Activated naive CD4-positive, alpha-beta T cell treated with anti-CD3 and anti-CD28 coated beads for 36 hours (primary cell): ENCODE measurements at regions of chr5 and their contacts with region 1.

Region 1: DNA sequence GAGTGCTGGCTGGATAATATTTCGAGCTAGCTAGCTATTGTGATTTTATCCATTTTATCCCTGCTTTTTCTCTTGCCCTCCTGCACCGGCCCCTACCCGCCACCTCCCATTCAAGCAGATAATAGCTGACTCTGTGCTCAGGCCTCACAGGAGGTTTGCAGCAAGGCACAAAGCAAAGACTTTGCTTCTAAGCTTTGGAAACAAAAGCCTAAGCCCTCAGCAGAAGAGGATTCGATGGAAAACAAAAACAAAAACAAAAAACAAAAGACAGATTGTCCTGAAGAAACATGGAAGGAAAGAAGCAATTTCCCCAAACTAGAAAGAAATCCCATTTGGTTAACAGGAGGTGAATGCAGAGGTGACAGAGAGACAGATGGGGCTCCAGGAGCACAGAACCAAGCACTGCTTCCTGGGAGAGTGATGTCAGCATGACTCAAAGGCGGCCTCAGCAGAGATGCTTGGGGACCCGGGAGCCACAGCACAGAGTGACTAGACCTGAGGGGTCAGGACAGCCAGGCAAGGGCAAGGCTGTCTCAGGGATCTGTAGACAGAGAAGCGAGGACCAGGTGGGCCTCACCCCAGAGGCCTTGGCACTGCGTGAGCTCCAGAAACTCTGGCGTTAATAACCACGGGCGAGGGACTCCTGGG is 28.4 kb downstream of the MTX3 start:
- DNase-seq: peak; percentile 61
- H3K4me3 Mint-ChIP-seq: no peak overlapping the region
- H3K27ac Mint-ChIP-seq: peak overlapping the region; percentile 33
- H3K4me1 Mint-ChIP-seq: peaks cover 16% of the 10 kb centered on the region
- H3K27me3 Mint-ChIP-seq: peaks cover 17% of the 10 kb centered on the region

Region 2: DNA sequence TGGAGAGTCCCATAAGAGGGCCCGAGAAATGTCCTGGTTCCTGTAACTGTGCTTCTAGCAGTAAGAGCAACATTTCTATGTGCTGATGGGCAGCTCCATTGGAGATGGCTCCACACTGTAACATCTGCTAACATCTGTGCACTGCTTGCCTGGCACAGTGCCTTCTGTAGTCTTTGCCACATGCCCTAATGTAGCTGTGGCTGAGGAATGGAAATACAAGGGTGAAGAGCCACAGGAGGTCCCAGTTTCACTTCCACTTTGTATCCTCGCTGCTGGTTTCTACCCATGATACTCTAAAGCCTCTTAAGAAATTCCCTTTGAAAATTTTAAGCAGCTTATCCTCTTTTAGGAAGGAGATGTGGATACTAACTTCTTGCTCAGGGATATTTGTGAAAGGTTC is 546.2 kb before region 1 on chr5:
- CTCF ChIA-PET with region 1: no interaction called
- intact Hi-C with region 1: no loop called
- DNase-seq: no peak
- H3K4me3 Mint-ChIP-seq: no peak overlapping the region
- H3K27ac Mint-ChIP-seq: no peak overlapping the region
- H3K4me1 Mint-ChIP-seq: no peaks in the 10 kb centered on the region
- H3K27me3 Mint-ChIP-seq: no peaks in the 10 kb centered on the region

Region 3: DNA sequence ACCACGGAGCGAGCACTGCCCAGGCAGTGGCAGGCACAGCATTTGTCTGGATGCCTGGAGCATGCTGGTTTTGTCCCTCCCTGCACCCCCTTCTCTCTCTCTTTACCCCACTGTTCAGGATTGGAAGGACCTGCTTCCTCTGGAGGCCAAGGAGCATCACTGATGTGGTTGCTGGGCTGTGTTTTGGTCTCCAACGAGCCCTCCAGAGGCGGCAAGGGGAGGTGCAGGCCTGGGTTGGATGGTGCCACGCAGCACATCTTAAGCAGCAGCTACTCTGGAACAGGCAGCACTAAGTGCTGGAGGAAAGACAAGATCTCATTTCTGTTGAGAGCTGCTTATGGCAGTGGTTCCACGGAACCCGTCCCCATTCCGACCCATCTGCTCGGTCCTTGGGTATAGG is 133.4 kb before region 1 on chr5:
- CTCF ChIA-PET with region 1: no interaction called
- intact Hi-C with region 1: no loop called
- DNase-seq: peak; percentile 12
- H3K4me3 Mint-ChIP-seq: no peak overlapping the region
- H3K27ac Mint-ChIP-seq: no peak overlapping the region
- H3K4me1 Mint-ChIP-seq: no peaks in the 10 kb centered on the region
- H3K27me3 Mint-ChIP-seq: peaks cover 6% of the 10 kb centered on the region

Region 4: DNA sequence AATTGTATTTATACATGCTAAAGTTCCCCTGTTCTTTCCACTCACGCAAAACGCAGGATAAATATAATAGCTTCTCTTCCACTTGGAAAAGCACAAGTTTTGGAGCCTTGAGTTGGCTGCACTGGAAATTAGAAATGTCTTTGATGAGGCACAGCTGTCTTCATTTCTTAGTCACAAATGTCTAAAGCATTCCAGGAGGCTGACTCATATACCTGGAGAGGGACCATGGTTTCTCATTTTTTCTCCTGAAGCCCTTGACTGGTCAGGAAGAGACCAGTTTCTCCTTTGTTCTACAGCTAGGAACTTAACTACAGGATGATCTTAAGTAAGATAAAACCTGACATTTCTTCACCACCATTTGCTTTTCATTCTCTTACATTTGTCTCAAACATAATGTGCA is 12.2 kb after region 1 on chr5:
- CTCF ChIA-PET with region 1: interaction called, 3 read pairs
- intact Hi-C with region 1: loop called (anchors 2 kb)
- DNase-seq: no peak
- H3K4me3 Mint-ChIP-seq: no peak overlapping the region
- H3K27ac Mint-ChIP-seq: no peak overlapping the region
- H3K4me1 Mint-ChIP-seq: no peaks in the 10 kb centered on the region
- H3K27me3 Mint-ChIP-seq: peaks cover 6% of the 10 kb centered on the region

Region 5: GRCh38 chr5:80033513-80033912 is 70.8 kb after region 1 on chr5:
- CTCF ChIA-PET with region 1: interaction called, 3 read pairs
- intact Hi-C with region 1: loop called (anchors 1 kb)
- DNase-seq: peak; percentile 64
- H3K4me3 Mint-ChIP-seq: no peak overlapping the region
- H3K27ac Mint-ChIP-seq: no peak overlapping the region
- H3K4me1 Mint-ChIP-seq: peaks cover 37% of the 10 kb centered on the region
- H3K27me3 Mint-ChIP-seq: peaks cover 40% of the 10 kb centered on the region

Region 6: GRCh38 chr5:80055491-80056170 is 92.9 kb after region 1 on chr5:
- CTCF ChIA-PET with region 1: no interaction called
- intact Hi-C with region 1: loop called (anchors 1 kb)
- DNase-seq: no peak
- H3K4me3 Mint-ChIP-seq: no peak overlapping the region
- H3K27ac Mint-ChIP-seq: no peak overlapping the region
- H3K4me1 Mint-ChIP-seq: peaks cover 2% of the 10 kb centered on the region
- H3K27me3 Mint-ChIP-seq: no peaks in the 10 kb centered on the region